Astrocyte of the cerebellum (primary cell): ENCODE measurements at regions of chr2 and their contacts with region 1.

Region 1: GRCh38 chr2:58923869-58924268 is 682.7 kb upstream of the FANCL start:
- DNase-seq: peak; percentile 94
- H3K4me3 ChIP-seq: no peak overlapping the region
- CTCF ChIP-seq: no peak

Region 2: DNA sequence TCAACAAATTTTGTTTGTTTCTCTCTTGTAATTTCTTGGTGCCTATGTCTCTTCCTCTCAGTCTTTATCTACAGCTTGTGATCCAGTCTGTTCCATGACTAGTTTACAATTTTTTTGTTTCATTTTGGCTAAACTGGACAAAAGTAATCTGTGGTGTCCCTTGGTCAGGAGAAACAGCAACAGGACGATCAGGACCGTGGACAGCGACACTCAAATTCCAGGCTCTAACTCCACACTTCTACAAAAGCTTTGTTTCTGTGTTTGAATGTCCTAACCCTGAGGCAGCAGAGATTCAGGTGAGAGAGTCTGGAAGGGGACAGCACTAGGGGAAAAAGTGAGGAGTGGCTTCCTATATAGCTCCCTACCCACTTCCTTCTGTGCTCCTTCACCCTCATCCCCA is 89.5 kb before region 1 on chr2:
- in situ Hi-C with region 1: loop called (anchors 5 kb)
- DNase-seq: peak; percentile 23
- H3K4me3 ChIP-seq: no peak overlapping the region
- CTCF ChIP-seq: no peak